ENCODE measurements at regions of chr2 and their contacts with region 1.

Region 1: DNA sequence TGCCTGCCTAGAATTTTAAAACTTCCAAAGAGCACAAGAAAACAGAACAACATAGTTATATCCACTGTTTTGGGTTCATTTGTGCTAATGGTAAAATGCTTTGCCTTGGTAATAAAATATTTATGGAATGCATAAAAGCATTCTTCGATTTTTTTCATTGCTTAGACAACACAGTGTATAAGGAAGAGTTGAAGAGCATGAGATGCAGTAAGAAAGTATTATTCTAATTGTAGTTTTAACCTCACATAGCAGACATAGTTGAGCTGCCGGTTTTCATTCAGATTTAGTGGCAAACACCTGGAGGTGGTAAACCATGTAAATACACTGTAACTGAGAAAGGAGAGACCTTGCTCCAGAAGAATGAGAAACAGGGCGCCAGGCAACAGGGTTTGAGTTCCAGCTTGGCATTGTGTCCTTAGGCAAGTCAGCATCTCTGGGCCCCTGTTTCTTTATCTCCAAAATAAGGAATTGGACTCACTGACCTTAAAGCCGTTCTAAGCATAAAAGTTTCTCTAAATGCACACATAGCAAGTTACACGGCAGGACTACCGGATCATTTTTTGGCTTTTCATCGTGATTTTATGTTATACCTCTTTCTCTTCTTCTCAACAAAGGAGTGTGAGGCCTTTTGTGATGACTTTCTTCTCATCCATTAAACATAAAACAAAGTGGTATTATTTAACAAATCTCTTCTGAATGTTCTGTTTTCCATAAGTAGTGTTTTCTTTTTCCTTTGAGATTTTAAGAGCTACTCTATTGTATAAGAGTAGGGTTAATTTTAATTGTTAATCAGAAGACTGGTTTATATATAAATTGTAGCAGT is 7.9 kb downstream of the UGP2 start:
- DNase-seq: no peak
- ATAC-seq: no peak
- H3K4me3 ChIP-seq: no peak overlapping the region
- H3K27ac ChIP-seq: no peak overlapping the region
- H3K4me1 ChIP-seq: peaks cover 82% of the 10 kb centered on the region
- H3K27me3 ChIP-seq: no peaks in the 10 kb centered on the region
- CTCF ChIP-seq: no peak
- EP300 ChIP-seq: no peak
- POLR2A ChIP-seq: no peak
- RAD21 ChIP-seq: no peak

Region 2: DNA sequence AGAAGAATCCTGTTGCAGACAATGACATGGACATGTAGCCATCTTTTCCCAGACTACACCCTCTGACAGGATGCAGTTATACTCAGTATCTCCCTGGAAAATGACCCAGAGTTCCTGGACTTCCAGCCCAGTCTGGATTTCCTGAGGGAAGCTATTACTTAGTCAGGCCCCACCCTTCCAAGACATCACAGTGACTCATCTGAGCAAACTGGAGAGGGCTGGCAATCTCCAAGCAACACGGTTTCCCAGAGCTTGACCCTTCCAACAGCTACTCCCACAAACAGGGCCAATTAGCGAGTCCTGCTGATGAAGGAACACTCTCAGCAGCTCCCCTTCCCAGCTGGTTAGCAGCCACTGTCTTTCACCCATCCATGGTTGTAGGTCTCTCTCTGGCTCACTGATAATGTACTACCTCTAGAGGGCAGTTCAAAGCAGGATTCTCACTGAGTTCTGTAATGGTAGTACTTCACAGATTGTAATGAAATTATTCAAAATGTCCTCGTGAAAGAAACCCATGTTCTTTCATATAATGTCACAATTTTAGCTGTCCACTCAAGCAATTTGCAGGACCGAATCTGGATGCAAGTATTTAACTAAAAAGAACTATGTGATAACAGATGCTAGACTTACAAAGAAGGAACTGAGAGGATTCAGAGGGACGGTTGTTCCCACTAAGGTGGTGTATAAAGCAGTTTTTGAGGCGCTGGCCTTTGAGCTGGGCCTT is 150.6 kb before region 1 on chr2:
- CTCF ChIA-PET with region 1: no interaction called
- POLR2A ChIA-PET with region 1: interaction called, 34 read pairs
- in situ Hi-C with region 1: loop called (anchors 5 kb)
- intact Hi-C with region 1: no loop called
- DNase-seq: peak; percentile 72
- ATAC-seq: peak; percentile 100
- H3K4me3 ChIP-seq: no peak overlapping the region
- H3K27ac ChIP-seq: no peak overlapping the region
- H3K4me1 ChIP-seq: peaks cover 21% of the 10 kb centered on the region
- H3K27me3 ChIP-seq: no peaks in the 10 kb centered on the region
- CTCF ChIP-seq: peak; percentile 91
- EP300 ChIP-seq: no peak
- POLR2A ChIP-seq: no peak
- RAD21 ChIP-seq: peak; percentile 87